HepG2 (cell line): ENCODE measurements at regions of chr6 and their contacts with region 1.

Region 1: DNA sequence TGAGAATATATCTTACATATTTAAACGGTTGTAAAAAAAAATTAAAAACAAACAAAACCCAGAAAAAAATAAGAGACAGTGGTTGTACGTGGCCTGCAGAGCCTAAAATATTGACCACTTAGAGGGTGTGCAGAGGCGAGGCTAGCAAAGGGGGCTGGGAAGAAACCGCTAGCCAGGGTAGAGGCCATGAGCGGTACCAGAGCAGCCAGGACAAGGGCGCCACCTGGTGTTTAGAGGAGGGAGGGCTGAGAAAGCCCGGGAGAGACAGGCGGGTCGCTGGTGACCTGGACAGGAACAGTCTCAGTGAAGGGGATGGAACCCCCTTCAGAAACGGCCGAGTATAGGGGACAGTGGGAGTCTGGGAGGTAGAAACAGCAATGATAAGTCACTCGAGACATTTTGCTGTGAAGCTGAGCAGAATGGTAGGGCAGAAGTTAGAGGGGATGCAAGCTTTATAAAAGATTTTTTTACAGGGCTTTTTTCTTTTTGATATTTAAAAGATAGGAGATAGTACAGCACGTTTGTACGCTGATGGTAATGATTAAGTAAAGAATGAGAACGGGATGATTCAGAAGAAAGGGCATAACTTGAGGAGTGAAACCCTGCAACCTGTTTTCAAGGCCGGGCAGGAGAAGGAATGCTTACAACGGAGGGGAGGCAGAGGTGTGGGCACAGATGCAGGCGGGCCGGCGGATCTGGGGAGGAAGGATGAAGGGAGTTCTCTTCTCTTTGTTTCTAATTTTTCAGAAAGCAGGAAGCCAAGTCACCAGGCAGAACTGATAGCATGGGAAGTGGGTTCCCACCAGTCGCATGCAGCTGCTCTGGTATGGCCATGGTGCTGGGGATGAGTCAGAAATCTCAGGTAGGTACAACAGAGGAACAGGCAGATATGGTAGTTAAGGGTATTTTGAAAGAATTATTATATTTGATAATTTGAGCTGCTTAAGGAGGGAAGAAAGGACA is 76.2 kb downstream of the FAM229B start:
- DNase-seq: peak; percentile 61
- ATAC-seq: peak; percentile 100
- H3K4me3 ChIP-seq: no peak overlapping the region
- H3K27ac ChIP-seq: no peak overlapping the region
- H3K4me1 ChIP-seq: no peaks in the 10 kb centered on the region
- H3K27me3 ChIP-seq: peaks cover 0 to 15% of the 10 kb centered on the region in 2 experiments; a peak in 2 of 5 replicates
- CTCF ChIP-seq: peak; percentile 95
- EP300 ChIP-seq: no peak
- POLR2A ChIP-seq: no peak
- RAD21 ChIP-seq: peak; percentile 88

Region 2: GRCh38 chr6:111709615-111710398 is 453.8 kb before region 1 on chr6:
- CTCF ChIA-PET with region 1: interaction called, 13 read pairs
- POLR2A ChIA-PET with region 1: no interaction called
- in situ Hi-C with region 1: loop called (anchors 25 kb)
- intact Hi-C with region 1: loop called (anchors 1 kb)
- DNase-seq: peak; percentile 68
- ATAC-seq: peak; percentile 97
- H3K4me3 ChIP-seq: no peak overlapping the region
- H3K27ac ChIP-seq: no peak overlapping the region
- H3K4me1 ChIP-seq: no peaks in the 10 kb centered on the region
- H3K27me3 ChIP-seq: no peaks in the 10 kb centered on the region
- CTCF ChIP-seq: peak; percentile 77
- EP300 ChIP-seq: no peak
- POLR2A ChIP-seq: no peak
- RAD21 ChIP-seq: peak; percentile 84

Region 3: GRCh38 chr6:112010328-112010727 is 153.2 kb before region 1 on chr6:
- CTCF ChIA-PET with region 1: no interaction called
- POLR2A ChIA-PET with region 1: no interaction called
- in situ Hi-C with region 1: no loop called
- intact Hi-C with region 1: loop called (anchors 5 kb)
- DNase-seq: peak; percentile 41
- ATAC-seq: peak; percentile 97
- H3K4me3 ChIP-seq: no peak overlapping the region
- H3K27ac ChIP-seq: no peak overlapping the region
- H3K4me1 ChIP-seq: peaks cover 17% of the 10 kb centered on the region; the same call in 1 of the 2 replicates
- H3K27me3 ChIP-seq: peaks cover 0 to 6% of the 10 kb centered on the region in 2 experiments; a peak in 2 of 5 replicates
- CTCF ChIP-seq: peak; percentile 90
- EP300 ChIP-seq: no peak
- POLR2A ChIP-seq: no peak
- RAD21 ChIP-seq: peak; percentile 65

Region 4: DNA sequence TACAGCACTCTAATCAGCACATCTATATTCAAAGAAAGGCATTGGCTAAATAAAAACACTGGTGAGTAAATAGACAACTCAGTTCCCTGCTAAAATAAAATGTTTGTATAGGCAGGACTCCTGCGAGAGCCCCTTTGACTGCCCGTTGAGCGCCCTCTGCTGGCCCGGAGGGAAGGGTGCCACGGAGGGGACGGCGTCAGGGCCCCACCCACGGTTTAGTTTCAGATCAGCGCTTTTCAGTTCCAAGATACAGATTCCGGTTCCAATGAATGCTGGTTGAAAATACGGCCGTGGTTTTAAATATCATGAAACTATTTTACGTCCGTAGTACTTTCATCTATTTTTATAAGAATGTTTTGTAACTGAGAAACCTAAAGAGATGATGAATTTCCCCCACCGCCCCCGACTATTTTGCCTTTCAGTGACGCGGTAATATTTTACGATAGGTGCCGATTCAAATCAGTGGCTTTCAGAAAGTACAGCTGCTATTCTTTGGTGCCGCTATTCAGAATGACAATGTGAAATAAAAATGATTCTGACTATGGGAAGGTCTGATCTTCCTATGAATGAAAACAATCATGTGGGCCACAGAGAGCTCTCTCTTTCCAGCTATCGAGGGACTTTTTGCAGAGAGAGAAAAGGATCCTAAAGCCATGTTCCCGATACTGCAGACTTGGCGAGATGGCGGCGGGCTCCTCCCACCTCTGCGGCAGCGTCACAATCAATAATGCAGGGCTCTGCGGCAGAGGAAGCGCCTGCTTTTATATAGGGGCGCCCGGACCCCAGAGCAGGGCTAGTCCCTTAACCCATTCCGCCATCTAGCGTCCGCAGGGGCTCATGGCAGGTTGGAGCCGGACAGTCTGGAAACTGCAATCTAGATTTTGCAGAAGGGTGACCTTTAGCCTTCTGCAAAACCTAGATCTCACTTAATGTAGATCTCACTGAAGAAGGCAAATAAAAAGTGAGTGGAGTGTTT is 120.3 kb before region 1 on chr6:
- CTCF ChIA-PET with region 1: no interaction called
- POLR2A ChIA-PET with region 1: no interaction called
- in situ Hi-C with region 1: no loop called
- intact Hi-C with region 1: loop called (anchors 1 kb)
- DNase-seq: peak; percentile 86
- ATAC-seq: peak; percentile 98
- H3K4me3 ChIP-seq: peak overlapping the region; percentile 62 to 93 (median 81)
- H3K27ac ChIP-seq: peak overlapping the region; percentile 31
- H3K4me1 ChIP-seq: peaks cover 4% of the 10 kb centered on the region; the same call in 1 of the 2 replicates
- H3K27me3 ChIP-seq: no peaks in the 10 kb centered on the region; a peak in 1 of 5 replicates
- CTCF ChIP-seq: peak; percentile 96
- EP300 ChIP-seq: no peak
- POLR2A ChIP-seq: no peak
- RAD21 ChIP-seq: peak; percentile 95

Region 5: GRCh38 chr6:112087136-112087911 is 76.3 kb before region 1 on chr6 and contains the starts of genes FAM229B and TUBE1:
- CTCF ChIA-PET with region 1: interaction called, 3 read pairs
- POLR2A ChIA-PET with region 1: no interaction called
- in situ Hi-C with region 1: loop called (anchors 5 kb)
- intact Hi-C with region 1: loop called (anchors 1 kb)
- DNase-seq: peak; percentile 94
- ATAC-seq: peak; percentile 96
- H3K4me3 ChIP-seq: peak within 1 kb of the TSS; percentile 75 to 97 (median 89)
- H3K27ac ChIP-seq: peak within 1 kb of the TSS; percentile 63
- H3K4me1 ChIP-seq: peaks cover 10% of the 10 kb centered on the region
- H3K27me3 ChIP-seq: no peaks in the 10 kb centered on the region; a peak in 1 of 5 replicates
- CTCF ChIP-seq: peak; percentile 54
- EP300 ChIP-seq: no peak
- POLR2A ChIP-seq: peak; percentile 74 to 95
- RAD21 ChIP-seq: 0 out of 2 replicates have a peak, but pooled peaks have one; percentile 24
- total RNA-seq, gene FAM229B: 19.5 and 23.7 TPM in 2 replicates
- total RNA-seq, gene TUBE1: 20.8 and 22.6 TPM in 2 replicates

Region 6: GRCh38 chr6:112139052-112139451 is 24.5 kb before region 1 on chr6:
- CTCF ChIA-PET with region 1: no interaction called
- POLR2A ChIA-PET with region 1: no interaction called
- in situ Hi-C with region 1: no loop called
- intact Hi-C with region 1: no loop called
- DNase-seq: no peak
- ATAC-seq: no peak
- H3K4me3 ChIP-seq: no peak overlapping the region
- H3K27ac ChIP-seq: no peak overlapping the region
- H3K4me1 ChIP-seq: peaks cover 3% of the 10 kb centered on the region; the same call in 1 of the 2 replicates
- H3K27me3 ChIP-seq: 0 out of 5 replicates have a peak, but pooled peaks cover 0 to 2% of the 10 kb centered on the region in 2 experiments
- CTCF ChIP-seq: no peak
- EP300 ChIP-seq: no peak
- POLR2A ChIP-seq: no peak
- RAD21 ChIP-seq: no peak